PC-3 (cell line): ENCODE measurements at regions of chr10 and their contacts with region 1.

Region 1: DNA sequence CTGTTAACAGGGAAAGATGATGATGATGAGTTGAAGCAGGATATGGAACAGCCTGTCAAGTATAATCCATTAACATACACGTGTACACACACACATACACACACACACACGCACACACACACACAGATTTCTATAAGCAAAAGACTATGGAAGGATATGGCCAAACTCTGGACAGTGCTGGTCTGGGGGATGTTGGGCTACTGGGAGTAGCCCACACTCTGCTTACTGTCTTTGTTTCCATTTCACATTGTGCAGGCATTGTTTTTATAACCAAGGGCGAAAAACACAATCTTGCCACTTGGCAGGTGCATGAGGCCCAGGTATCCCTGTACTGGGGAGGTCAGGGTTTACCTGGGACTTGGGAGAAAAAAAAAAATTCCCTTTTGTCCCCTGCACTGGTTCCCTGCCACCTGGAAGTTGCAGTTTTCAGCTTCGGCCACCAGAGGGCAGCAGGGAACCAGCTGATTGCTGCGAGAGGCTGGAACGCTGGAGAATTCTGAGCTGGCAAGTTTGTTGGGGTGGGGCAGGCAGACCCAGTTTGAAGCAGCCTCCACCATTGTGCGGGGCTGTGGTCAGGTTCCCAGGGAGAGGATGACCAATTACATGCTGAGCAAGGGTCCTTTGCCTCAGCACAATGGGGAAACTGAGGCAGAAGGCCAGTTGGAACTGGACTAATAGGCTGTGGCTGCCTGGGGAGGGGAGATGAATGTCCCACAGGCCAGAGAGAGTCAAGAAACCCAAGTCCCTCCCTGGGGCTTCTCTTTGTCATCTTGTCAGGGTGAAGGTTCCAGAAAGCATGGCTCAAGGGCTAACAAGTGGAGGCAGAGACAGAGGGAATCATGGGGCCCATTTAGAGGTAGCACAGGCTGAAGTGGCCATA is 27.3 kb downstream of the PPIF start:
- DNase-seq: peak; percentile 100
- ATAC-seq: peak; percentile 81
- H3K4me3 ChIP-seq: no peak overlapping the region
- H3K27ac ChIP-seq: no peak overlapping the region
- H3K4me1 ChIP-seq: peaks cover 10% of the 10 kb centered on the region
- H3K27me3 ChIP-seq: no peaks in the 10 kb centered on the region
- CTCF ChIP-seq: peak; percentile 100

Region 2: DNA sequence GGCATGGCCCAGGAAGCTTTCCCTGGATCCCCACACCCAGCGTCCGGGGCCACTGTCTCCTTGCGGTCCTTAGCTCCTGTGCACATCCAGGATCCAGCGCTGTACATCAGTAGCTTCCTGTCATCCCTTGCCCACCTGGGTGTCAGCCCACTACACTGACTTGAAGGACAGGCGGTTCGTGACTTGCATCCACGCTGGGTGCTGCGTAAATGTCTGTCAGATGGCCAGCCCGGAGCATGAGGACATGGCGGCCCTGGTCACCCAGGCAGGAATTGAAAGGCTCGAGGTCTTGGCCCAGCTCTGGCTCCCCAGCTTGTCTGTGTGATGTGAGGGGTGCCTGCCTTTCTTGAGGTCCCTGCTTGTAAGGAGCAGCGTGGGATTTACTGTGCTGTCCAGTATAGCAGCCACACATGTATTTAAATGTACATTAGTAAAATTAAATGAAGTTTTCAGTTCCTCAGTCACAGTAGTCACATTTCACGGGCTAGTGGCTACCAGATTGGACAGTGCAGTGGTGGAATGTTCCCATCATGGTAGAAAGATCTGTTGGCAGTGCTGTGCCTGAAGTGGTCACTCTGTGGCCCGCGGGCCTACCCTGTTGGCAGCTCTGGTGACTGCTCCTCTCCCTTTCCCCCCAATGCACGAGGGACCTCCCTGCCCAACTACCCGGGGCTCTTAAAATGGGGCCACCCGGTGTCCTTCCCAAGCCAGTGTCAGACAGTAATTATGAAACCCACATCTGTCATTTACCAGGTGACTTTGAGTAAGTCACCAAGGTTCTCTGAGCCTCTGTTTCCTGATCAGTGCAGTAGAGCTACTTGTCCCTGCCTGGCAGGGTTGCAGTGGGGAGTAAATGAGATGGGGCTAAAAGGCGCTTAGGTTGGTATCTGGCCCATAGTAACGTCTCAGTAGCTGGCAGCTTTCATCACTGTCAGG is 125.1 kb before region 1 on chr10:
- CTCF ChIA-PET with region 1: no interaction called
- POLR2A ChIA-PET with region 1: no interaction called
- intact Hi-C with region 1: no loop called
- DNase-seq: no peak
- ATAC-seq: no peak
- H3K4me3 ChIP-seq: no peak overlapping the region
- H3K27ac ChIP-seq: no peak overlapping the region
- H3K4me1 ChIP-seq: no peaks in the 10 kb centered on the region
- H3K27me3 ChIP-seq: no peaks in the 10 kb centered on the region
- CTCF ChIP-seq: no peak

Region 3: DNA sequence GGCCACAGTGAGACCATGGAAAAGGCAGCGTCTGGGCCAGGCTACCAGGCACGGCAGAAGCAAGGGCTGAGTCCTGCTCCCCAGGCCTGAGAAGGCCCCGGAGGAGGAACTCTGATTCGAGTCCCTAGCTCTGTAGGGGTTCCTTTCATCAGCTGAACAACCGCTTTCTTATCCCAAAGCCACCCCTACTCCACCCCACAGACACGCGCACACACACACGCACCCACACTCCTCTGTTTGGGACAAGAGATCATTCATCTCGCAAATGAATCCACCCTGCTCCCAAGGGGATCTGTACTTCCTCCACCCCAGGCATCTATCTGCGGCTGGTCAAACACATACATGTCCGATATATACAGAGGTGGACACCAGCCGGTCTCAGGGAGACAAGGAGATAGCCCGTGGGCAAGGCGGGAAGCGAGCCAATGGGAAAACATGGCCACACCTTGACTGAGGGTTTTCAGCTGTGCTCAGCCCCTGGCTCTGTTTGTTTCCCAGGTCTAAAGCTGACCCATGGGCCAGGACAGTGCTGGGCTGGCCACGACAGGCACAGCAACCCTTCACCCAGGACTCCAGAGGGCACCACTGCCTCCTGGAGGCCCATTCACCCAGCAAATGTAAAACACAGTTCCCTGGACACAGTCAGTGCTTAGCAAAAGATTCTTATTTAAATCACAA is 63.6 kb after region 1 on chr10:
- CTCF ChIA-PET with region 1: interaction called, 15 read pairs
- POLR2A ChIA-PET with region 1: no interaction called
- intact Hi-C with region 1: no loop called
- DNase-seq: peak; percentile 64
- ATAC-seq: peak; percentile 2; the same call in 1 of the 2 replicates
- H3K4me3 ChIP-seq: no peak overlapping the region
- H3K27ac ChIP-seq: peak overlapping the region; percentile 82
- H3K4me1 ChIP-seq: peaks cover 81% of the 10 kb centered on the region
- H3K27me3 ChIP-seq: no peaks in the 10 kb centered on the region
- CTCF ChIP-seq: peak; percentile 96

Region 4: GRCh38 chr10:79487296-79488194 is 113.0 kb after region 1 on chr10:
- CTCF ChIA-PET with region 1: interaction called, 64 read pairs
- POLR2A ChIA-PET with region 1: interaction called, 4 read pairs
- intact Hi-C with region 1: loop called (anchors 1 kb)
- DNase-seq: peak; percentile 97
- ATAC-seq: peak; percentile 69
- H3K4me3 ChIP-seq: no peak overlapping the region
- H3K27ac ChIP-seq: peak overlapping the region; percentile 30
- H3K4me1 ChIP-seq: peaks cover 24% of the 10 kb centered on the region
- H3K27me3 ChIP-seq: no peaks in the 10 kb centered on the region
- CTCF ChIP-seq: peak; percentile 99

Region 5: GRCh38 chr10:79502561-79503309 is 128.2 kb after region 1 on chr10:
- CTCF ChIA-PET with region 1: interaction called, 35 read pairs
- POLR2A ChIA-PET with region 1: no interaction called
- intact Hi-C with region 1: loop called (anchors 1 kb)
- DNase-seq: peak; percentile 96
- ATAC-seq: peak; percentile 98
- H3K4me3 ChIP-seq: peak overlapping the region; percentile 8; the same call in 1 of the 2 replicates
- H3K27ac ChIP-seq: no peak overlapping the region
- H3K4me1 ChIP-seq: peaks cover 1% of the 10 kb centered on the region; the same call in 1 of the 2 replicates
- H3K27me3 ChIP-seq: peaks cover 12% of the 10 kb centered on the region; the same call in 1 of the 2 replicates
- CTCF ChIP-seq: peak; percentile 96